ENCODE measurements at regions of chr17 and their contacts with region 1.

Region 1: DNA sequence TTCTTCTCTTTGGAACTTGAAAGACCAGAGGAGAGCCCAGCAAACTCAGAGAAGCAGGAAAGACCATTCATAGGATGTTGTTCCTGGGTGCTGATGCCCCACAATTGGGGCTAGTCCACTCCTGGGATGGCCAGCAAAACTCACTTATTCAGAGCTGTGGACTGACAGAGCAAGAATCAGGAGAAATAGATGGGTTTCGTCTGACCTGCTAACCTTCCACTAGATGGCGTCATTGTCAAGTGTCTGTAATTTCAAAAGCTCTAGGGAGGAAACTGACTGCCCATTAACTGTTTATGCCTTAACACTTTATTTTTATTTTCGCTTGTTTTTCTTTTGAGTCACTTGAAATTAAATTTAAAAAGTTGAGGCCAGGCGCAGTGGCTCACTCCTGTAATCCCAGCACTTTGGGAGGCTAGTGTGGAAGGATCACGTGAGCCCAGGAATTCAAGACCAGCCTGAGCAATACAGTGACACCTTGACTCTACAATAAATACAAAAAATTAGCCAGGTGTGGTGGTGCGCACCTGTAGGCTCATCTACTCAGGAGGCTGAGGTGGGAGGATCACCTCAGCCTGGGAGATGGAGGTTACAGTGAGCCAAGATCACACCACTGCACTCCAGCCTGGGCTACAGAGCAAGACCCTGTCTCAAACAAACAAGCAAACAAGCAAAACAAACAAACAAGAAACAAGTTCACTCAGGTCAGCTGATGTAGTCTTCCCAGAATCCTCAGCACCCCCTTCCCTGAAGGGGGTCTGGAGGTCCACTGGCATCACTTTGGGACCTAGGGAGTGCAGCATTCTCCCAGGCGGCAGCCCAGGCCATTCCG is 28.6 kb upstream of the MILR1 start:
- DNase-seq: peak in 1 of 3 donors; percentile 38
- ATAC-seq: peak; percentile 92
- H3K4me3 ChIP-seq: no peak overlapping the region
- H3K4me1 ChIP-seq: no peaks in the 10 kb centered on the region
- CTCF ChIP-seq: peak; percentile 59

Region 2: DNA sequence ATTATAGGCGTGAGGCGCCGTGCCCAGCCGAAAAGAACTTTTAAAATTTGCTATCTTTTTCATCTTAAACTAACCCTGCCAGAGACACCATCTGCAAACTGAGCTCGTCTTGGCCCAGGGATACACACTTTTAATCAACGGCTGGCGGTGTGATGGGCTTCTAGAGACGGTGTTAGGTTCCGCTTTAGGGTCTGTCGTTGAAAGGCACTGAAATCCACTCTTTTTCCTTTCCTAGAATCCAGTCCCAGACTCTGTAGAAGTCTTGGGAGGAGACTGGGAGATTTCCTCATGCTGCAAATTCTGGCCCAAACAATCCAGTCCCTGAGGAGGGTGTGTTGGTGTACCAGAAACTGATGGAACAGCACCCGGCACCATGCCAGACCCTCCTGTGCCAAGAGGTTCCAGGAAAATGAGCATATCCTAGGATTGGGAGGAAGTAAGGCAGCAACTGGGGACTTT is 105.3 kb before region 1 on chr17:
- intact Hi-C with region 1: loop called (anchors 5 kb)
- DNase-seq: peak; percentile 69 to 76 (median 70)
- ATAC-seq: peak; percentile 55
- H3K4me3 ChIP-seq: no peak overlapping the region
- H3K4me1 ChIP-seq: peaks cover 3% of the 10 kb centered on the region
- CTCF ChIP-seq: no peak

Region 3: DNA sequence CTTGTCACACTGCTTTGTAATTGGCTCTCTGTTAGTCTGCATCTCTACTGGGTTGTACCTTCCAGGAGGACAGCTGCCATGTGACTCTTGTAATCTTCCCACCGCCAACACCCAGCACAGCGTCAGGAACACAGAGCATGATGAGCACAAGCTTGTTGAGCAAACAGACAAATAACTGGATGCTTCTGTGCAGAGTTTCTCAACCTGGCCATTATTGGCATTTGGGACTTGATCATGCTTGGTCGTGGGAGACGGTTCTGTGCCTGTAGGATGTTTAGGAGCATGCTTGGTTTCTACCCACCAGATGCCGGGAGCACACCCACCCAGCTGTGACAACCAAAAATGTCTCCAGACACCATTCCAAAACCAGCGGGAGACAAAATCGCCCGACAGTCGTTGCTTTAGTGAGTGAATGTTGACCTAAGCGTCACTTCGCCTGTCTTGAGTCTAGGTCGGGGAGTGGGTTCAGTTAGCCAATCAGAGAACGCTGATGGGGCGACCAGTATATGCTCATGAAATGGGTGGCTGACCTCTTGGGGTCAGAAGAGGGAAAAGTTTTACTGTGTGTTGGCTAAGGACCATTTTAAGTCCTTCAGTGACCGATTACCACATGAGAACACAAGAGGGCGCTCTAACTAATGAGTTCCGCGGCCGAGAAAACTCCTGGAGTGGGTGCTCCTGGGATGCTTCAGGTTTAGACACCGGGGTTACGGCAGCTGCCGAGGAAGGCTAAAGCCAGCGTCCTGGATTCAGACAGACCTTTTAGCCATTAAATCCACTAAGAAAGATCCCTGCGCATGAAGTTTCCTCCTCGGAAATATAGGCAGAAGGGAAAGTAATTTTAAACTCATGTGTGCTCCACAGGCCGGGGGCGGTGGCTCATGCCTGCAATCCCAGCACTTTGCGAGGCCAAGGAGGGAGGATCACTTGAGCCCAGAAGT is 99.5 kb before region 1 on chr17:
- intact Hi-C with region 1: loop called (anchors 5 kb)
- DNase-seq: peak in 1 of 3 donors; percentile 77
- ATAC-seq: peak; percentile 83
- H3K4me3 ChIP-seq: no peak overlapping the region
- H3K4me1 ChIP-seq: no peaks in the 10 kb centered on the region
- CTCF ChIP-seq: peak; percentile 46

Region 4: DNA sequence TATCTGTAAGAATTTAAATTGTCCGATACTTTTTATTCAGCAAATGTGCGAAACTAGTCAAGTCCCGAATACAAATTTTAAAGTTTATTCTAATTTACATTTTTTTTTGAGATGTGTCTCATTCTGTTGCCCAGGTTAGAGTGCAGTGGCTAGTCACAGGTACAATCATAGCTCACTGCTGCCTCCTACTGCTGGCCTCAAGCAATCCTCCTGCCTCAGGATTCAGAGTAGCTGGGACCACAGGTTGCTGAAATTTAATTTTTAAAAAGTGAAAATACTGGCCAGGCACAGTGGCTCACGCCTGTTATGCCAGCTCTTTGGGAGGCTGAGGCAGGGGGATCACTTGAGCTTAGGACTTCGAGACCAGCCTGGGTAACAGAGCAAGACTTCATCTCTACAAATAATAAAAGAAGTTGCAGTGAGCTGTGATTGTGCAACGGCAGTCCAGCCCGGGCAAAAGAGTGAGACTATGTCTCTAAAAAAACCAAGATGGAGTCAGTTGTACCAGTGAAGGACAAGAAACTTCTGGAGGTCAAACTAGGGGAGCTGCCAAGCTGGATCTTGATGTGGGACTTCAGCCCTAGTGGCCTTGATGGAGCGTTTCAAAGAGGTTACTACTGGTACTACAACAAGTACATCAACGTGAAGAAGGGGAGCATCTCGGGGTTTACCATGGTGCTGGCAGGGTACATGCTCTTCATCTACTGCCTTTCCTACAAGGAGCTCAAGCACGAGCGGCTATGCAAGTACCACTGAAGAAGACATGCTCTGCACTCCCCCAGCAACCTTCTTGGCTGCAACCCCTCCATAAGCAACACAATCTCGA is 70.9 kb after region 1 on chr17:
- intact Hi-C with region 1: loop called in 1 of 2 experiments (anchors 5 kb)
- DNase-seq: peak in 2 of 3 donors; percentile 42 to 52
- ATAC-seq: peak; percentile 78
- H3K4me3 ChIP-seq: no peak overlapping the region
- H3K4me1 ChIP-seq: peaks cover 18% of the 10 kb centered on the region
- CTCF ChIP-seq: peak; percentile 45

Measured in mucosa of descending colon (tissue), 3 donors.